Activated CD4-positive, alpha-beta memory T cell treated with anti-CD3 and anti-CD28 coated beads, Interleukin-2, amount 10 ng/mL, durations not matched to agents 7 days and 5 days (primary cell): ENCODE measurements at regions of chr2 and their contacts with region 1.

Region 1: DNA sequence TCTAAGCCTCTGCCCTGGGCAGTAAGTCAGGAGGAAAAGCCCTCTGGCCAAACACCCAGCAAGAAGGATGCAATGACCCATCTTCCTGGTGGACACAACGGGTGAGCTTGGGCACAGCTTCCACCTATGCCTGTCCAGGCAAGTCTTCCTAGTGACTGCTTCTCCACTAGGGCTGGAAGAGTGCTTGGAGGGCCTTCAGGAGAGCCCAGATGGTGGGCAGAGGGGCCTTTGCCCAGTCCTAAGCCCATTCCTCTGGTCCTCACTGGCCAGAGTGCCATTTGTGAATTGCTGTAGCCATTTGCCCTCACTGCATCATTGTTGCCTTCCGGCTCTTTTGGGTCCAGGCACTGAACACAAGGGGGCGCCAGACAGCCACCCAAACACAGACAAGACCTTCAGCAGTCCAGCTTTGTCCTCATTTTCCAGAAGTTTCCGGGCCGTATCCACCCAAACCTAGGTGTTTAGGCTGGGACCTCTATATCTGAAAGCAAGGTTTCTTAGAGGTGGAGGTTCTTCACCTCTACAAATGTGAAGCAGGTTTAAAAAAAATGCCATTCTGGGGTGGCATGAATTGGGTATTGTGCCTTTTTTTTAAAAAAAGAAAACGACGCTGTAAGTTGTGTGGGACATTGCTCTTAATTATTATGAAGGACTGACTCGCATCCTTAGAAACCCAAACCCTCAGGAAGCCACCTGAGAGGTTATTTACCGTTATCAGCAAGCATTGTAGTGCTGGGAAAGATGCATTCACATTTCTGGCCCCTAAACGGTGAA is 29.5 kb downstream of the PAX8 start:
- DNase-seq: peak; percentile 82
- H3K4me3 Mint-ChIP-seq: no peak overlapping the region
- H3K27ac Mint-ChIP-seq: peak overlapping the region; percentile 82
- H3K4me1 Mint-ChIP-seq: peaks cover 58% of the 10 kb centered on the region
- H3K27me3 Mint-ChIP-seq: no peaks in the 10 kb centered on the region

Region 2: DNA sequence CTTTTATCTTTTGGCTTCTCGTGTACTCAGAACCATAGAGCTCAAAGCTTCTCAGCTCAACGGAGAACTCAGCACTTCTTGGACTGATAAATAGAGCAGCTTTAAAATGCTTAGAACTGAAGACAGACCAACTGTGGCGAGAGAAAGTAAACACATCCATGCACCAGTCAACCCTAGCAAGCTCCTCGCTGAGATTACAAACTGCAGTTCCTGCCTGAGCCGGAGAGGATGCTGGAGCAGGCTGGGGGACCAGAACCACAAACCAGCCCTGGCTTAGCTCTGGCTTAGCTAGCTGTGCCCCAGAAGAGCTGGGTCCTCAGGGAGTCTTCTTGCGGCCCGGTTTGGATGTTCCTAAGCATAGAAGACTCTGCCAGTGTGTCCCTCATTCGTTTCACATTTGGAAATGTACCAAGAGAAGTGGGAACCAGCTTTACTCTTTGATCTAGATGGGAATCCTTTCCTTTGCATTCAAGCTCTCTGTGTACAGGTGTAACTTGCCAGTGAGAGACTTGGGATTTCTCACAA is 23.9 kb after region 1 on chr2:
- CTCF ChIA-PET with region 1: interaction called, 19 read pairs
- POLR2A ChIA-PET with region 1: interaction called, 4 read pairs
- DNase-seq: peak; percentile 32
- H3K4me3 Mint-ChIP-seq: no peak overlapping the region
- H3K27ac Mint-ChIP-seq: no peak overlapping the region
- H3K4me1 Mint-ChIP-seq: peaks cover 10% of the 10 kb centered on the region
- H3K27me3 Mint-ChIP-seq: peaks cover 60% of the 10 kb centered on the region

Region 3: GRCh38 chr2:113370478-113371091 is 121.4 kb after region 1 on chr2:
- CTCF ChIA-PET with region 1: interaction called, 35 read pairs
- POLR2A ChIA-PET with region 1: interaction called, 3 read pairs
- DNase-seq: peak; percentile 75
- H3K4me3 Mint-ChIP-seq: no peak overlapping the region
- H3K27ac Mint-ChIP-seq: no peak overlapping the region
- H3K4me1 Mint-ChIP-seq: peaks cover 10% of the 10 kb centered on the region
- H3K27me3 Mint-ChIP-seq: peaks cover 10% of the 10 kb centered on the region

Region 4: DNA sequence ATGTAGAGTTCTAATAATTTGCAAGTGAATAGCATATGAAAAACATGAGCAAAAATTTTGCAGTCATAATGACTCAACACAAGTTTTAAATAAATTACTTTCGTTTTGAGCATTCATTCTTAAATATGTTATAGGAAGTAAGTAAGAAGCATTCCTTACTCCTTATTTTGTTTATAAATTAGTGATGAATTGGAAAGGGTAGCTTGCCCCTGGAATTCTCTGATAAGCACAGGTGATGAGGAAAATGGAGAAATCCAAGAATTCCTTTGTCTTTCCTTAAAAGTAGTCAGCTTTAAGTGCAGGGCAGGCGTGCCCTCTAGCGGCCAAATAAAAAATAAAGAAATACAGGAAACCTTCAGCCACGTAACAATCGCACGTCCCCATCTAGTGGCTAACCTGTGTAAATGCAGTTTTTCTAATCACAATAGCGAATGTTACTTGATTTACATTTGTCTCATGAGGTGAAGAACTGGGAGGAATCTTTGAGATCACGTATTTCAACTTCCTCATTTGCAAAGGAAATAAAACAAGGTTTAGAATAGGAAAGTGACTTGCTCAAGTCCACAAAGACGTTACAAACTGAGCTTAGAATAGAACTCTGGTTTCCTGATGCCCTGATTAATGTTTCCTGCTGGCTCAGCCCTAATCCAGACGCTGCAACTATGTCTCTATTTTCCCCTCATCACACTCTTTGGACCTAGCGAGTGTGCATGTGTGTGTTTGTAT is 141.1 kb after region 1 on chr2:
- CTCF ChIA-PET with region 1: interaction called, 35 read pairs
- POLR2A ChIA-PET with region 1: no interaction called
- DNase-seq: peak; percentile 62
- H3K4me3 Mint-ChIP-seq: peak overlapping the region; percentile 53
- H3K27ac Mint-ChIP-seq: peak overlapping the region; percentile 16
- H3K4me1 Mint-ChIP-seq: peaks cover 16% of the 10 kb centered on the region
- H3K27me3 Mint-ChIP-seq: peaks cover 21% of the 10 kb centered on the region

Region 5: GRCh38 chr2:113407446-113408099 is 158.4 kb after region 1 on chr2:
- CTCF ChIA-PET with region 1: no interaction called
- POLR2A ChIA-PET with region 1: no interaction called
- DNase-seq: no peak
- H3K4me3 Mint-ChIP-seq: no peak overlapping the region
- H3K27ac Mint-ChIP-seq: no peak overlapping the region
- H3K4me1 Mint-ChIP-seq: no peaks in the 10 kb centered on the region
- H3K27me3 Mint-ChIP-seq: peaks cover 52% of the 10 kb centered on the region

Region 6: DNA sequence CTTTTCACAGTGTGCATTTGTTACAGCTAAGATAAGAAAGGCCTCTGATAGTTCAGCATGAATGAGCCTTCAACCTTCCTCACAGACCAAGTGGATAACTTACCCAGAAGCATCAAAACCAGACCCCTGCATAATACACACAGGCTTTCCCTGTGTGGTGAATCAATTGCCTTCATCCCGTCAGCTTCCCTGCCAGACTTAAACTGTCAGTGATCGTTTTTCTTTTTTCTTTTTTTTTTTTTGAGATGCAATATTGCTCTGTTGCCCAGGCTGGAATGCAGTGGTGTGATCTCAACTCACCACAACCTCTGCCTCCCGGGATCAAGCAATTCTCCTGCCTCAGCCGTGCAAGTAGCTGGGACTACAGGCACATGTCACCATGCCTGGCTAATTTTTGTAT is 527.8 kb after region 1 on chr2:
- CTCF ChIA-PET with region 1: no interaction called
- POLR2A ChIA-PET with region 1: no interaction called
- DNase-seq: no peak
- H3K4me3 Mint-ChIP-seq: no peak overlapping the region
- H3K27ac Mint-ChIP-seq: no peak overlapping the region
- H3K4me1 Mint-ChIP-seq: no peaks in the 10 kb centered on the region
- H3K27me3 Mint-ChIP-seq: peaks cover 7% of the 10 kb centered on the region